CD4-positive, alpha-beta T cell (primary cell): ENCODE measurements at regions of chrX and their contacts with region 1.

Region 1: GRCh38 chrX:7908821-7909220 is 18.4 kb downstream of the PNPLA4 start:
- DNase-seq: no peak
- ATAC-seq: no peak
- H3K4me3 ChIP-seq: no peak overlapping the region
- H3K4me3 Mint-ChIP-seq: no peak overlapping the region
- H3K27ac ChIP-seq: no peak overlapping the region
- H3K27ac Mint-ChIP-seq: no peak overlapping the region
- H3K4me1 ChIP-seq: no peaks in the 10 kb centered on the region
- H3K4me1 Mint-ChIP-seq: no peaks in the 10 kb centered on the region
- H3K27me3 ChIP-seq: no peaks in the 10 kb centered on the region
- H3K27me3 Mint-ChIP-seq: no peaks in the 10 kb centered on the region
- CTCF ChIP-seq: no peak

Region 2: DNA sequence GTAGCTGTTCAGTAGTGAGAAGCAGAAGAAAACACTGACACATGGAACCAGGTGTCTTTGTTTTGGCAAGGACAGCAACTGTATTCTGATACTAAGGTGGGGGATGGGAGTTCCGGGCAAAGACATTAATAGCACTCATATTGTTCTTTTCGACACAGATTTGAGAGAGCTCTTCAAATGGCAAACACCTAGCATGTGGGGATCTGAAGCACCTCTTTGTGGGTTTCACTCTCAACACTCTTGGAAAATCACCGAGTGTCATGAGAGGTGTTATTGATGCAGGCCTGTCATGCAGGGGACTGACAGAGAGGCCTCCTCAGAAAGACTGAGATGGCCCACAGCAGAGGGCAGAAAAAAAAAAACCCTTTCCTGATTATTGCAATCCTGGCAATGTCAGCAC is 294.2 kb before region 1 on chrX:
- CTCF ChIA-PET with region 1: no interaction called
- POLR2A ChIA-PET with region 1: no interaction called
- intact Hi-C with region 1: no loop called
- DNase-seq: no peak
- ATAC-seq: no peak
- H3K4me3 ChIP-seq: no peak overlapping the region
- H3K4me3 Mint-ChIP-seq: no peak overlapping the region
- H3K27ac ChIP-seq: no peak overlapping the region
- H3K27ac Mint-ChIP-seq: no peak overlapping the region
- H3K4me1 ChIP-seq: no peaks in the 10 kb centered on the region
- H3K4me1 Mint-ChIP-seq: no peaks in the 10 kb centered on the region
- H3K27me3 ChIP-seq: no peaks in the 10 kb centered on the region
- H3K27me3 Mint-ChIP-seq: no peaks in the 10 kb centered on the region
- CTCF ChIP-seq: no peak

Region 3: DNA sequence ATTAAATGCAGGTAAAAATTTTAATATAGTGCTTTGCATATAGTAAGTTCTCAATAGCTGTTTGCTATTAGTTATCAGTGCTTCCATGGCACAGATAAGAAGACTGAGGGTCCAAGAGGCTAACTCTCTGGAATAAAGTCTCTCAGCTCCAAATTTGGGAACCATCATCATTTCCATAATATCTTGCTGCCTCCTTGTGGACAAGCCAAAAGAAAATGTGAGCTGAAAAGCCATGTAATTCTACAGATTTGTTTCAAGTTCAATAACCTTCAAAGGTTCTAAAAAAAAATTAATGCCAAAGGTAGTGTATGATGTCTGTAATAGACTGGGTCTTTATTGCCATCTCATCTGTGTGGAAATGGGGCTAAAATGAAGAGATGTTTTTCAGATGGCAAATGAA is 202.8 kb before region 1 on chrX:
- CTCF ChIA-PET with region 1: no interaction called
- POLR2A ChIA-PET with region 1: no interaction called
- intact Hi-C with region 1: no loop called
- DNase-seq: no peak
- ATAC-seq: no peak
- H3K4me3 ChIP-seq: no peak overlapping the region
- H3K4me3 Mint-ChIP-seq: no peak overlapping the region
- H3K27ac ChIP-seq: no peak overlapping the region
- H3K27ac Mint-ChIP-seq: no peak overlapping the region
- H3K4me1 ChIP-seq: no peaks in the 10 kb centered on the region
- H3K4me1 Mint-ChIP-seq: no peaks in the 10 kb centered on the region
- H3K27me3 ChIP-seq: no peaks in the 10 kb centered on the region
- H3K27me3 Mint-ChIP-seq: no peaks in the 10 kb centered on the region
- CTCF ChIP-seq: no peak

Region 4: DNA sequence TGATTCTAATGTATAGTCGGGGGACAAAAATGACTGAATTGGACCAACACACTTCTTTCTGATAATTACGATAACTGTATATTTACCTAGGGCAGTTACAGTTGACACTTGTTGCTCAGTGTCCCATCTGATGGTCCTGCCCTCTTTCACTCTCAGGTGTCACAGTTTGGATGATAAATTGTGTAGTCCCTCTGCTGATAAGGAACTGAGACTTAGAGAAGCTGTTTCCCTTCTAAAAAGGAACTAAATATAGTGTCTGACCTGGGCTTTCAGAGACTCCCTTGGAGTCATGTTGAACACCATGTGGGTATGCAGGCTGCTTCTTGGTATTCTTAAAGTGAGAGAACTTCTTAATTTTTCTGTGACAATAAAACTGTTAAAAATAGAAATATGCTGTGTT is 42.0 kb after region 1 on chrX:
- CTCF ChIA-PET with region 1: no interaction called
- POLR2A ChIA-PET with region 1: no interaction called
- intact Hi-C with region 1: loop called in 1 of 2 experiments (anchors 2 kb)
- DNase-seq: no peak
- ATAC-seq: no peak
- H3K4me3 ChIP-seq: no peak overlapping the region
- H3K4me3 Mint-ChIP-seq: no peak overlapping the region
- H3K27ac ChIP-seq: no peak overlapping the region
- H3K27ac Mint-ChIP-seq: no peak overlapping the region
- H3K4me1 ChIP-seq: no peaks in the 10 kb centered on the region
- H3K4me1 Mint-ChIP-seq: no peaks in the 10 kb centered on the region
- H3K27me3 ChIP-seq: no peaks in the 10 kb centered on the region
- H3K27me3 Mint-ChIP-seq: no peaks in the 10 kb centered on the region
- CTCF ChIP-seq: no peak